ENCODE measurements at regions of chr10 and their contacts with region 1.

Region 1: DNA sequence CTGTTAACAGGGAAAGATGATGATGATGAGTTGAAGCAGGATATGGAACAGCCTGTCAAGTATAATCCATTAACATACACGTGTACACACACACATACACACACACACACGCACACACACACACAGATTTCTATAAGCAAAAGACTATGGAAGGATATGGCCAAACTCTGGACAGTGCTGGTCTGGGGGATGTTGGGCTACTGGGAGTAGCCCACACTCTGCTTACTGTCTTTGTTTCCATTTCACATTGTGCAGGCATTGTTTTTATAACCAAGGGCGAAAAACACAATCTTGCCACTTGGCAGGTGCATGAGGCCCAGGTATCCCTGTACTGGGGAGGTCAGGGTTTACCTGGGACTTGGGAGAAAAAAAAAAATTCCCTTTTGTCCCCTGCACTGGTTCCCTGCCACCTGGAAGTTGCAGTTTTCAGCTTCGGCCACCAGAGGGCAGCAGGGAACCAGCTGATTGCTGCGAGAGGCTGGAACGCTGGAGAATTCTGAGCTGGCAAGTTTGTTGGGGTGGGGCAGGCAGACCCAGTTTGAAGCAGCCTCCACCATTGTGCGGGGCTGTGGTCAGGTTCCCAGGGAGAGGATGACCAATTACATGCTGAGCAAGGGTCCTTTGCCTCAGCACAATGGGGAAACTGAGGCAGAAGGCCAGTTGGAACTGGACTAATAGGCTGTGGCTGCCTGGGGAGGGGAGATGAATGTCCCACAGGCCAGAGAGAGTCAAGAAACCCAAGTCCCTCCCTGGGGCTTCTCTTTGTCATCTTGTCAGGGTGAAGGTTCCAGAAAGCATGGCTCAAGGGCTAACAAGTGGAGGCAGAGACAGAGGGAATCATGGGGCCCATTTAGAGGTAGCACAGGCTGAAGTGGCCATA is 27.3 kb downstream of the PPIF start:
- DNase-seq: peak; percentile 80
- ATAC-seq: peak; percentile 89
- H3K4me3 Mint-ChIP-seq: no peak overlapping the region
- H3K27ac Mint-ChIP-seq: no peak overlapping the region
- H3K4me1 Mint-ChIP-seq: no peaks in the 10 kb centered on the region
- H3K27me3 Mint-ChIP-seq: no peaks in the 10 kb centered on the region
- CTCF ChIP-seq: peak; percentile 99

Region 2: DNA sequence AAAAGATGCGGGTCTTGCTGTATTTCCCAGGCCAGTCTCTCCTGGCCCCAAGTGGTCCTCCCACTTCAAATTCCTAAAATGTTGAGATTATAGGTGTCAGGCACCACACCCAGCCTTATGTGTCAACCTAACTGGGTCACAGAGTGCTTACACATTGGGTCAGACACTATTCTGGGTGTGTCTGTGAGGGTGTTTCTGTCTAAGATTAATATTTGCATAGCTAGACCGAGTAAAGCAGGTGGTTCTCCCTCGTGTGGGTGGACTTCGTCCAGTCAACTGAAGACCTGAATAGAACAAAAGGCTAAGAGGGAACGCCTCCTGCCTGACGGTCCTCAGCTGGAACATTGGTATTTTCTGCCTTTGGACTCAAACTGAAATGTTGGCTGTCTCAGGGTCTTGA is 15.8 kb before region 1 on chr10:
- CTCF ChIA-PET with region 1: interaction called, 29 read pairs
- POLR2A ChIA-PET with region 1: no interaction called
- intact Hi-C with region 1: no loop called
- DNase-seq: no peak
- ATAC-seq: no peak
- H3K4me3 Mint-ChIP-seq: no peak overlapping the region
- H3K27ac Mint-ChIP-seq: no peak overlapping the region
- H3K4me1 Mint-ChIP-seq: peaks cover 38% of the 10 kb centered on the region
- H3K27me3 Mint-ChIP-seq: no peaks in the 10 kb centered on the region
- CTCF ChIP-seq: no peak

Region 3: GRCh38 chr10:79400146-79401004 is 25.8 kb after region 1 on chr10:
- CTCF ChIA-PET with region 1: interaction called, 21 read pairs
- POLR2A ChIA-PET with region 1: no interaction called
- intact Hi-C with region 1: no loop called
- DNase-seq: peak; percentile 83
- ATAC-seq: peak; percentile 89
- H3K4me3 Mint-ChIP-seq: no peak overlapping the region
- H3K27ac Mint-ChIP-seq: no peak overlapping the region
- H3K4me1 Mint-ChIP-seq: no peaks in the 10 kb centered on the region
- H3K27me3 Mint-ChIP-seq: no peaks in the 10 kb centered on the region
- CTCF ChIP-seq: peak; percentile 70

Region 4: DNA sequence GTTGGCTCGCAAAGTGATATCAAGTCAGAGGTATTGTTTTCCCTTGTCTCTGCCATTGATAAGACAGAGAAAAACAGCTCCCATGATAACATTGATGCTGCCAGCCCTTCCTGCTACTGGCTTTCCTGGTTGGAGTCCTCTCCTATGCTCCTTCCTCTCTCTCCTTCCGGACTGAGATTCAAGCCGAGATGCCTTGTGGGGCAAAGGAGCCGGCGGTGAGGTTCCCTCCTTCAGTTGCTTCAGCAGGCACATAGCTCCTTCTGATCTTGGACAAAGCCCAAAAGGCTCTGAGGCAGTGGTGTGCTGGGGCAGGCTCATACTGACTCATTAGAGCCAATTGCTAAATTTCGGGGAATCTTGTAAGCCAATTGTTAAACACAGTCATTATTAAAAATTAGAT is 79.7 kb after region 1 on chr10:
- CTCF ChIA-PET with region 1: interaction called, 15 read pairs
- POLR2A ChIA-PET with region 1: interaction called, 3 read pairs
- intact Hi-C with region 1: no loop called
- DNase-seq: no peak
- ATAC-seq: no peak
- H3K4me3 Mint-ChIP-seq: no peak overlapping the region
- H3K27ac Mint-ChIP-seq: no peak overlapping the region
- H3K4me1 Mint-ChIP-seq: no peaks in the 10 kb centered on the region
- H3K27me3 Mint-ChIP-seq: peaks cover 7% of the 10 kb centered on the region
- CTCF ChIP-seq: no peak

Region 5: GRCh38 chr10:79463578-79464496 is 89.3 kb after region 1 on chr10:
- CTCF ChIA-PET with region 1: interaction called, 55 read pairs
- POLR2A ChIA-PET with region 1: interaction called, 3 read pairs
- intact Hi-C with region 1: loop called (anchors 2 kb)
- DNase-seq: no peak
- ATAC-seq: no peak
- H3K4me3 Mint-ChIP-seq: no peak overlapping the region
- H3K27ac Mint-ChIP-seq: no peak overlapping the region
- H3K4me1 Mint-ChIP-seq: no peaks in the 10 kb centered on the region
- H3K27me3 Mint-ChIP-seq: peaks cover 2% of the 10 kb centered on the region
- CTCF ChIP-seq: no peak

Region 6: GRCh38 chr10:79475119-79475653 is 100.6 kb after region 1 on chr10:
- CTCF ChIA-PET with region 1: interaction called, 55 read pairs
- POLR2A ChIA-PET with region 1: no interaction called
- intact Hi-C with region 1: no loop called
- DNase-seq: no peak
- ATAC-seq: no peak
- H3K4me3 Mint-ChIP-seq: no peak overlapping the region
- H3K27ac Mint-ChIP-seq: no peak overlapping the region
- H3K4me1 Mint-ChIP-seq: no peaks in the 10 kb centered on the region
- H3K27me3 Mint-ChIP-seq: peaks cover 10% of the 10 kb centered on the region
- CTCF ChIP-seq: no peak

Region 7: GRCh38 chr10:79487296-79488194 is 113.0 kb after region 1 on chr10:
- CTCF ChIA-PET with region 1: interaction called, 22 read pairs
- POLR2A ChIA-PET with region 1: no interaction called
- intact Hi-C with region 1: no loop called
- DNase-seq: peak; percentile 48
- ATAC-seq: peak; percentile 90
- H3K4me3 Mint-ChIP-seq: no peak overlapping the region
- H3K27ac Mint-ChIP-seq: no peak overlapping the region
- H3K4me1 Mint-ChIP-seq: no peaks in the 10 kb centered on the region
- H3K27me3 Mint-ChIP-seq: no peaks in the 10 kb centered on the region
- CTCF ChIP-seq: peak; percentile 57

Region 8: DNA sequence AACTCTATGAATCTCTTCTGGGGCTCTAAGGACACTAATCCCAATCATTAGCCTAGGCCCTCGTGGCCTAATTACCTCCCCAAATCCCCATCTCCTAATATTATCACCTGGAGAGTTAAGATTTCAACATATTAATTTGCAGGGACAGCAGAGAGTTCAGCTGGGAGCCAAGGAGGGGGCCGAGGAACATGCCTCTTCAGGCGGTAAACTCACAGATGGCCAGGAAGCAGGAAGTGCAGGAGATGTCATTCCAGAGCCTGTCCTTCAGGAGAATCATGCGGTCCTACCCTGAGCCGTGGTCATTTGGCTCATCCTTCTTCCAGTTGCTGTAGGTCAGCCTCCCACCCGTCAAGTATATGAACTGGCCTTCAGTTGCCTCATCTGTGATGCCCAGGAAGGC is 207.5 kb after region 1 on chr10:
- CTCF ChIA-PET with region 1: no interaction called
- POLR2A ChIA-PET with region 1: no interaction called
- intact Hi-C with region 1: no loop called
- DNase-seq: no peak
- ATAC-seq: no peak
- H3K4me3 Mint-ChIP-seq: no peak overlapping the region
- H3K27ac Mint-ChIP-seq: no peak overlapping the region
- H3K4me1 Mint-ChIP-seq: no peaks in the 10 kb centered on the region
- H3K27me3 Mint-ChIP-seq: peaks cover 10% of the 10 kb centered on the region
- CTCF ChIP-seq: no peak